B cell (primary cell): ENCODE measurements at regions of chr4 and their contacts with region 1.

Region 1: DNA sequence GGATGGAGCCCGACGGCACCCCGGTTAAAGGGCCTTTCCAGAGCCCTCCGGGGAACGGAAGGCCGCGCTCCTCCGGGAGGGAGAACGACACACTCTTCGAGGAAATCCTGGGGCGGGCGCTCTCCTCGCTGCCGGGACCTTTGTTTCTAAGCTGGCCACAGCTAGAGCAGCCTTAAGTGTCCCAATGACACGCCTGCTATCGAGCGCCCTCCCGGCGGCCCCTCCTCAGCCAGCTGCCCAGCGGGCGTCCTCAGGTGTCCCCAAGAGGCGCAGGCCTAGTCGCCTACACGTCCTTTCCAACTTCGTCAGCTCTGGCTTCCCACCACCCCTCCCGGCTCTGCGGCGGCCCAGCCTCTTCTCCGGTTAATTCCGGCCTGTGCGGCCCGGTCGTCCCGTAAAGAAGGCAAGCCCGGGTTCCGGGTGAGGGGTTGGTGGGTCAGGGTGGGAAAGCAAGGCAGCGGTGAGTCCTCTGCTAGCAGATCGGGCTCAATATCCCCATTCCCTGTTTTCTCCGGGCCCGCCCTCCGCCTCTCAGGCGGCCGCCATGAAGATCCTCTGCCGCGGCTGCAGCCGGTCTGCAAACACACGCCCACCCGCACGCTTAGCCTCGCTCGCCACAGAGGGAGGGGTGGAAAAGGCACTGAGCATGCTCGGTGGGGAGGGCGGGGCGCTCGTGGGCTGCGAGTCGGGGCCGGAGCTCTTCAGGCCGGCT is 449 bp upstream of the RAP1GDS1 start:
- DNase-seq: peak; percentile 95
- ATAC-seq: peak; percentile 91
- H3K4me3 ChIP-seq: peak overlapping the region; percentile 71 to 98 (median 95)
- H3K4me3 Mint-ChIP-seq: peak overlapping the region; percentile 97
- H3K27ac ChIP-seq: peak overlapping the region; percentile 84 to 90
- H3K27ac Mint-ChIP-seq: peak overlapping the region; percentile 98
- H3K4me1 ChIP-seq: peaks cover 18 to 25% of the 10 kb centered on the region in 2 donors
- H3K4me1 Mint-ChIP-seq: peaks cover 40% of the 10 kb centered on the region
- H3K27me3 ChIP-seq: no peaks in the 10 kb centered on the region
- H3K27me3 Mint-ChIP-seq: no peaks in the 10 kb centered on the region
- CTCF ChIP-seq: no peak

Region 2: GRCh38 chr4:98143001-98143899 is 117.5 kb before region 1 on chr4 and contains the start of gene STPG2:
- CTCF ChIA-PET with region 1: interaction called, 16 read pairs
- POLR2A ChIA-PET with region 1: interaction called, 12 read pairs
- intact Hi-C with region 1: loop called (anchors 1 kb)
- DNase-seq: peak; percentile 97
- ATAC-seq: peak; percentile 98
- H3K4me3 ChIP-seq: peak within 1 kb of the TSS; percentile 69 to 86 (median 84)
- H3K4me3 Mint-ChIP-seq: peak within 1 kb of the TSS; percentile 94
- H3K27ac ChIP-seq: peak within 1 kb of the TSS; percentile 91 to 93
- H3K27ac Mint-ChIP-seq: peak within 1 kb of the TSS; percentile 96
- H3K4me1 ChIP-seq: peaks cover 15 to 18% of the 10 kb centered on the region in 2 donors
- H3K4me1 Mint-ChIP-seq: peaks cover 24% of the 10 kb centered on the region
- H3K27me3 ChIP-seq: no peaks in the 10 kb centered on the region
- H3K27me3 Mint-ChIP-seq: no peaks in the 10 kb centered on the region
- CTCF ChIP-seq: peak; percentile 77
- total RNA-seq, gene STPG2: 0.41 and 0.49 TPM in 2 replicates

Region 3: GRCh38 chr4:98203332-98204235 is 57.2 kb before region 1 on chr4:
- CTCF ChIA-PET with region 1: interaction called, 4 read pairs
- POLR2A ChIA-PET with region 1: interaction called, 12 read pairs
- intact Hi-C with region 1: loop called (anchors 1 kb)
- DNase-seq: peak; percentile 75
- ATAC-seq: peak; percentile 89
- H3K4me3 ChIP-seq: peak overlapping the region; percentile 32 to 64 (median 53)
- H3K4me3 Mint-ChIP-seq: peak overlapping the region; percentile 89
- H3K27ac ChIP-seq: peak overlapping the region; percentile 74 to 86
- H3K27ac Mint-ChIP-seq: peak overlapping the region; percentile 97
- H3K4me1 ChIP-seq: peaks cover 27% of the 10 kb centered on the region in 2 donors
- H3K4me1 Mint-ChIP-seq: peaks cover 35% of the 10 kb centered on the region
- H3K27me3 ChIP-seq: no peaks in the 10 kb centered on the region
- H3K27me3 Mint-ChIP-seq: no peaks in the 10 kb centered on the region
- CTCF ChIP-seq: no peak

Region 4: GRCh38 chr4:98658287-98659105 is 397.8 kb after region 1 on chr4 and contains the start of gene TSPAN5:
- CTCF ChIA-PET with region 1: no interaction called
- POLR2A ChIA-PET with region 1: interaction called, 6 read pairs
- intact Hi-C with region 1: loop called (anchors 2 kb)
- DNase-seq: peak; percentile 89
- ATAC-seq: peak; percentile 84
- H3K4me3 ChIP-seq: peak within 1 kb of the TSS; percentile 34 to 92 (median 81)
- H3K4me3 Mint-ChIP-seq: peak within 1 kb of the TSS; percentile 89
- H3K27ac ChIP-seq: peak within 1 kb of the TSS; percentile 37 to 74
- H3K27ac Mint-ChIP-seq: peak within 1 kb of the TSS; percentile 75
- H3K4me1 ChIP-seq: peaks cover 27 to 33% of the 10 kb centered on the region in 2 donors
- H3K4me1 Mint-ChIP-seq: peaks cover 52% of the 10 kb centered on the region
- H3K27me3 ChIP-seq: peaks cover 0 to 10% (median 1%) of the 10 kb centered on the region in 4 experiments
- H3K27me3 Mint-ChIP-seq: peaks cover 8% of the 10 kb centered on the region
- CTCF ChIP-seq: no peak
- total RNA-seq, gene TSPAN5: 5.3 TPM in 2 replicates

Region 5: DNA sequence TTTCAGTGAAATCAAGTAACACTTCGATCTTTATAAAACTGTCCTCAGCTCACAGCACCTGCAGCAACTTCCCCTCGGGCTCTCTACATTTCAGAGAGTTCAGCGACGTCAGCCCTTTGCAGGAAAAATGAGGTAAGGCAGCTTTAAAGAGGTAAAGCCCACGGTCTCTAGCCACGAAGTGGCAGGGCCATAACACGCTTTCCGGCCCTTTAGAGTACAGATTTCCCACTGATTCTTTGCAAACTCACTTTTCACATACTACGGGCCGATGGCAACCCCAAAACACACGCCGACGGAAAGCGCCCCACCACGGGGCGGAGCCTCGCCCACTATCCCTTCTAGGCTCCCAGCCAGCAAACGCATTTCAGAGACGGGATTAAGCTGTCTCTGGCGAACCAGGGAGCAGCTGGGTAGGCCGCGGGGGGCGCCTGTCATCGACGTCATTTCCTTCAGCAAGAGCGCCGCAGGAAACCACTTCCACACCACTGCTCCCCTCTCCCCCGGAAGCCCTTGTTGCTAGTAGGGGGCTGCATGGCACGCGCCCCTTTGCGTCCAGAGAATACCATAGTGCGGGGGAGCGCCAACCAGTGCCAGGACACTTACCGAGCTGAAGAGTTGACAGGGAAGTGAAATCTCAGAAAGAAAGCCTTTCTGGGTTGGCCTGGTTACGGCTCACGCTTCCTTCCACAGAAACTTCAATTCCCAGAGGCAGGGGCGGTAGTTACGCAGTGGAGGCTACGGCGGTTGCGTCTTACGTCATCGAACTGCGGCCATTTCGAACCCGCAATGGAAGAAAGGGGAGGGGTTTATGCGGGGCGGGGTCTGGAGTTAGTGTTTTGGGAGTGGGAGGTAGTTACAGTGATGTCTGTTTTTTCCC is 1302.8 kb after region 1 on chr4 and contains the start of gene TRMT10A:
- CTCF ChIA-PET with region 1: no interaction called
- POLR2A ChIA-PET with region 1: no interaction called
- intact Hi-C with region 1: loop called (anchors 2 kb)
- DNase-seq: peak; percentile 98
- ATAC-seq: peak; percentile 84
- H3K4me3 ChIP-seq: peak within 1 kb of the TSS; percentile 73 to 92 (median 80)
- H3K4me3 Mint-ChIP-seq: peak within 1 kb of the TSS; percentile 99
- H3K27ac ChIP-seq: peak within 1 kb of the TSS; percentile 96
- H3K27ac Mint-ChIP-seq: peak within 1 kb of the TSS; percentile 100
- H3K4me1 ChIP-seq: peaks cover 4 to 9% of the 10 kb centered on the region in 2 donors
- H3K4me1 Mint-ChIP-seq: peaks cover 18% of the 10 kb centered on the region
- H3K27me3 ChIP-seq: peaks cover 0 to 9% (median 2%) of the 10 kb centered on the region in 4 experiments
- H3K27me3 Mint-ChIP-seq: peaks cover 24% of the 10 kb centered on the region
- CTCF ChIP-seq: no peak
- total RNA-seq, gene TRMT10A: 4.5 and 5.5 TPM in 2 replicates